Transverse colon (tissue), 4 donors: ENCODE measurements at regions of chr11 and their contacts with region 1.

Region 1: GRCh38 chr11:134050541-134051383 is 18.1 kb upstream of the JAM3 start:
- DNase-seq: peak; percentile 80
- H3K4me3 ChIP-seq: peak overlapping the region in 3 of 4 donors; percentile 26 to 47 (median 29)
- H3K27ac ChIP-seq: peak overlapping the region; percentile 66 to 77 (median 76)
- H3K4me1 ChIP-seq: peaks cover 0 to 16% (median 8%) of the 10 kb centered on the region in 4 donors
- H3K27me3 ChIP-seq: peaks cover 6% of the 10 kb centered on the region
- CTCF ChIP-seq: peak; percentile 90 to 97 (median 95)
- EP300 ChIP-seq: no peak
- POLR2A ChIP-seq: peak; percentile 60

Region 2: GRCh38 chr11:133600786-133601185 is 450.0 kb before region 1 on chr11:
- in situ Hi-C with region 1: no loop called
- intact Hi-C with region 1: no loop called
- DNase-seq: no peak
- H3K4me3 ChIP-seq: no peak overlapping the region
- H3K27ac ChIP-seq: no peak overlapping the region
- H3K4me1 ChIP-seq: no peaks in the 10 kb centered on the region
- H3K27me3 ChIP-seq: no peaks in the 10 kb centered on the region
- CTCF ChIP-seq: no peak
- EP300 ChIP-seq: no peak
- POLR2A ChIP-seq: no peak

Region 3: GRCh38 chr11:133927690-133928627 is 122.8 kb before region 1 on chr11:
- in situ Hi-C with region 1: no loop called
- intact Hi-C with region 1: loop called (anchors 1 kb)
- DNase-seq: peak; percentile 69
- H3K4me3 ChIP-seq: peak overlapping the region in 2 of 4 donors; percentile 3 to 36
- H3K27ac ChIP-seq: peak overlapping the region in 1 of 4 donors; percentile 26
- H3K4me1 ChIP-seq: peaks cover 8 to 13% (median 11%) of the 10 kb centered on the region in 4 donors
- H3K27me3 ChIP-seq: no peaks in the 10 kb centered on the region
- CTCF ChIP-seq: peak; percentile 83 to 86 (median 84)
- EP300 ChIP-seq: no peak
- POLR2A ChIP-seq: no peak

Region 4: DNA sequence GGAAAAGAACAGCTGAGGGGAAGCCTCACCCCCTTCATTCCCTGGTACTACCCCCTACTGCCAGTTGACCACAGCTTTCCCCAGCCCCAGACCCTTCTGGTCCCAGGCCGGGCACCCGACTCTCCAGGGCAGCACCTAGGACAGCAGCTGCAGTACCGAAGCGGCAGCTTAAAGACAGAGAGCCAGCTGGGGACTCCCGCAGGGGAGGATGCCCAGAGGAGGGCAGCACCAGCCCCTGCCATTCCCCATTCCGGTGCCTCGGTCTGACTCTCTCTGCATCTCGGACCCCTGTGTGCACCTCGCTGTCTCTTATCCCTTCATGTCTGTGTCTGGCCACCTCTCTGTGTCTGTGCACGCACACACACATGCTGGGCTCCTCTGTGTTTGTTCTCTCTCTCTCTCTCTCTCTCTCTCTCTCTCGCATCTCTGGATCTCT is 103.4 kb before region 1 on chr11:
- in situ Hi-C with region 1: no loop called
- intact Hi-C with region 1: loop called (anchors 5 kb)
- DNase-seq: no peak
- H3K4me3 ChIP-seq: no peak overlapping the region
- H3K27ac ChIP-seq: peak overlapping the region in 2 of 4 donors; percentile 41 to 44
- H3K4me1 ChIP-seq: peaks cover 15 to 43% (median 27%) of the 10 kb centered on the region in 4 donors
- H3K27me3 ChIP-seq: no peaks in the 10 kb centered on the region
- CTCF ChIP-seq: peak in 2 of 5 experiments; percentile 15 to 22
- EP300 ChIP-seq: no peak
- POLR2A ChIP-seq: no peak

Region 5: GRCh38 chr11:134139873-134140331 is 89.1 kb after region 1 on chr11:
- in situ Hi-C with region 1: loop called (anchors 5 to 10 kb)
- intact Hi-C with region 1: loop called (anchors 1 kb)
- DNase-seq: peak; percentile 60
- H3K4me3 ChIP-seq: no peak overlapping the region
- H3K27ac ChIP-seq: peak overlapping the region; percentile 28 to 73 (median 56)
- H3K4me1 ChIP-seq: peaks cover 0 to 6% (median 3%) of the 10 kb centered on the region in 4 donors
- H3K27me3 ChIP-seq: no peaks in the 10 kb centered on the region
- CTCF ChIP-seq: peak; percentile 77 to 89 (median 81)
- EP300 ChIP-seq: no peak
- POLR2A ChIP-seq: no peak

Region 6: DNA sequence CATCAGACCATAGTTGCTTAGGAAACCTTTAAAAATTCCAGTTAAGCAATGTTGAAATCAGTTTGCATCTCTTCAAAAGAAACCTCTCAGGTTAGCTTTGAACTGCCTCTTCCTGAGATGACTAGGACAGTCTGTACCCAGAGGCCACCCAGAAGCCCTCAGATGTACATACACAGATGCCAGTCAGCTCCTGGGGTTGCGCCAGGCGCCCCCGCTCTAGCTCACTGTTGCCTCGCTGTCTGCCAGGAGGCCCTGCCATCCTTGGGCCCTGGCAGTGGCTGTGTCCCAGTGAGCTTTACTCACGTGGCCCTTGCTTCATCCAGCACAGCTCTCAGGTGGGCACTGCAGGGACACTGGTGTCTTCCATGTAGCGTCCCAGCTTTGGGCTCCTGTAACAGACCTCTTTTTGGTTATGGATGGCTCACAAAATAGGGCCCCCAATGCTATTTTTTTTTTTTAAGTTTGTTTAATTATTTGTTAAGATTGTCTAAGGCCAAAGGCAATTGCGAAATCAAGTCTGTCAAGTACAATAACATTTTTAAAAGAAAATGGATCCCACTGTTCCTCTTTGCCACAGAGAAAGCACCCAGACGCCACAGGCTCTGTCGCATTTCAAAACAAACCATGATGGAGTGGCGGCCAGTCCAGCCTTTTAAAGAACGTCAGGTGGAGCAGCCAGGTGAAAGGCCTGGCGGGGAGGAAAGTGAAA is 99.6 kb after region 1 on chr11:
- in situ Hi-C with region 1: loop called in 3 of 4 experiments (anchors 5 to 10 kb)
- intact Hi-C with region 1: no loop called
- DNase-seq: peak; percentile 17
- H3K4me3 ChIP-seq: no peak overlapping the region
- H3K27ac ChIP-seq: peak overlapping the region in 1 of 4 donors; percentile 11
- H3K4me1 ChIP-seq: no peaks in the 10 kb centered on the region
- H3K27me3 ChIP-seq: no peaks in the 10 kb centered on the region
- CTCF ChIP-seq: no peak
- EP300 ChIP-seq: peak; percentile 13
- POLR2A ChIP-seq: no peak